Common myeloid progenitor, CD34-positive (primary cell): ENCODE measurements at regions of chr6 and their contacts with region 1.

Region 1: DNA sequence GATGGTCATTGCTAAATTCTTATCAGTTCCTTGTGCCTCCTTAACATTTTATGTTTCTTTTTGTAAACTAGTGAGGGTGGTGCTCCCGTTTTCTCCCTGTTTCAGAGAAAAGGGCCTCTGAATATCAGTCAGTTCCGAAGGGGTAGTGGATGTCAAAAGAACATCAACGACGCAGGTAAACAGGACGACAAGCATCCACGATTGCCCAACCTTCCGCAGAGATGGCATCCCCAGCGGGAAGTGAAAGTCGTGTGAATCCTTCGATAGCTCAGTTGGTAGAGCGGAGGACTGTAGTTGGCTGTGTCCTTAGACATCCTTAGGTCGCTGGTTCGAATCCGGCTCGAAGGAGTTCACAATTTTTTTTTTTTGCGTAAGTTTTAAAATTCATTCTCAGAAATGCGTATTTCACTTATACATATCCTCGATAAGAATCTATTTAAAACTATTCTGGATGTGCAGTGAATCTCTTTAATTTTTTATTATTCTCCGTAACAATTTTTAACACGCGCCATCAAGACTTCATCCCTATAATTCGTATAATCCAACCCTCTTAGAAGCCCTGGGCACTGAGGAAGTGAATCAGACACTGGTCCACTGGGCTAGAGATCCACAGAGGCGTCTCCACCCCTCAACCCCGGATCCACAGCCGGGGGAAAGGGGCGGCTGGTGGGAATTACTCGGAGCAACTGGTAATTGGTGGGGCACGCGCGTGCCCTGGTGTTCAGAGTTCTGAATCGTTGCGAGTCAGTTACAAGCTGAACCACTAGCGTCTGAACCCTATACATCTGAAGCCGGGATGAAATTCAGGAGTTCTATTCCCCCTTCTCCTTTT is 27.9 kb upstream of the ABT1 start:
- DNase-seq: peak; percentile 94 to 98 (median 96)
- H3K4me3 ChIP-seq: peak overlapping the region; percentile 50 to 97 (median 89)
- H3K27ac ChIP-seq: peak overlapping the region; percentile 13 to 78
- H3K4me1 ChIP-seq: peaks cover 0 to 10% (median 1%) of the 10 kb centered on the region in 4 experiments
- H3K27me3 ChIP-seq: no peaks in the 10 kb centered on the region

Region 2: DNA sequence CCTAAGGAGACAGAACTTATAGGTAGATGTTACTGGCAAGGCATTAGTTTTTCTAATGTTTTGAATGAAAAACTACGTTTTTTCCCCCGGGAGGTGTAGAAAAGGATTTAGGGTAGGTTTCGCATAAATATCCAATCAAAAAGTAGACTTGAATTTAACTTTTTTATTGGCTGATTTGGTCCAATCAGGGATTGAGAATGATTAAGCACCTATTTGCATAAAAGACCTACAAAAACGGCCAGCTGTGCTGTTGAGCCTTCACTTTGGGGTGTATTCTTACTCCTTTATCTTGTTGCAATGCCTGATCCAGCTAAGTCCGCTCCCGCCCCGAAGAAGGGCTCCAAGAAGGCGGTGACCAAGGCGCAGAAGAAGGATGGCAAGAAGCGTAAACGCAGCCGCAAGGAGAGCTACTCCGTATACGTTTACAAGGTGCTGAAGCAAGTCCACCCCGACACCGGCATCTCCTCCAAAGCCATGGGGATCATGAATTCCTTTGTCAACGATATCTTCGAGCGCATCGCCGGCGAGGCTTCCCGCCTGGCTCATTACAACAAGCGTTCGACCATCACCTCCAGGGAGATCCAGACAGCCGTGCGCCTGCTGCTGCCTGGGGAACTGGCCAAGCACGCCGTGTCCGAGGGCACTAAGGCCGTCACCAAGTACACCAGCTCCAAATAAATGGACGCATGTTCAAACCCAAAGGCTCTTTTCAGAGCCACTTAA is 317.3 kb before region 1 on chr6:
- CTCF ChIA-PET with region 1: no interaction called
- POLR2A ChIA-PET with region 1: no interaction called
- DNase-seq: peak; percentile 87 to 93 (median 93)
- H3K4me3 ChIP-seq: peak overlapping the region; percentile 58 to 96 (median 82)
- H3K27ac ChIP-seq: peak overlapping the region; percentile 36 to 82
- H3K4me1 ChIP-seq: peaks cover 9 to 34% (median 20%) of the 10 kb centered on the region in 4 experiments
- H3K27me3 ChIP-seq: no peaks in the 10 kb centered on the region

Region 3: DNA sequence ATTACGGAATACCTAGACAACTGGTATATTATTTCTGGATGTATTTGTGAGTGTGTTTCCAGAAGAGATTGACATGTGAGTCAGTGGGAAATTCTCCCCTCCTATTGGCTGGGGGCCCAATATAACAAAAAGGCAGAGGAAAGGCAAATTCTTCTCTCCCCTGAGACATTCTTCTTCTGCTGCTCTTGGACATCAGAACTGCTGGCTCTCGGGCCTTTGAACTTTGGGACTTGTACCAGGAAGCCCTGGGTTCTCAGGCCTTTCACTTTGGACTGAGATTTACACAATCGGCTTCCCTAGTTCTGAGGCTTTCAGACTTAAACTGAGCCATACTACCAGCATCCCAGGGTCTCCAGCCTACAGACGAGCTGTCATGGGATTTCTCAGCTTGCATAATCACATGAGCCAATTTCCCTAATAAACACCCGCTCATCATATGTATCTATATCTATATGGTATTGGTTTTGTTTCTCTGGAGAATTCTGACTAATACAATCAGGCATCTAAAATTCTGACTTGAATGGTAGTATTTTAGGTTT is 136.1 kb before region 1 on chr6:
- CTCF ChIA-PET with region 1: no interaction called
- POLR2A ChIA-PET with region 1: no interaction called
- DNase-seq: no peak
- H3K4me3 ChIP-seq: no peak overlapping the region
- H3K27ac ChIP-seq: no peak overlapping the region
- H3K4me1 ChIP-seq: no peaks in the 10 kb centered on the region
- H3K27me3 ChIP-seq: no peaks in the 10 kb centered on the region

Region 4: DNA sequence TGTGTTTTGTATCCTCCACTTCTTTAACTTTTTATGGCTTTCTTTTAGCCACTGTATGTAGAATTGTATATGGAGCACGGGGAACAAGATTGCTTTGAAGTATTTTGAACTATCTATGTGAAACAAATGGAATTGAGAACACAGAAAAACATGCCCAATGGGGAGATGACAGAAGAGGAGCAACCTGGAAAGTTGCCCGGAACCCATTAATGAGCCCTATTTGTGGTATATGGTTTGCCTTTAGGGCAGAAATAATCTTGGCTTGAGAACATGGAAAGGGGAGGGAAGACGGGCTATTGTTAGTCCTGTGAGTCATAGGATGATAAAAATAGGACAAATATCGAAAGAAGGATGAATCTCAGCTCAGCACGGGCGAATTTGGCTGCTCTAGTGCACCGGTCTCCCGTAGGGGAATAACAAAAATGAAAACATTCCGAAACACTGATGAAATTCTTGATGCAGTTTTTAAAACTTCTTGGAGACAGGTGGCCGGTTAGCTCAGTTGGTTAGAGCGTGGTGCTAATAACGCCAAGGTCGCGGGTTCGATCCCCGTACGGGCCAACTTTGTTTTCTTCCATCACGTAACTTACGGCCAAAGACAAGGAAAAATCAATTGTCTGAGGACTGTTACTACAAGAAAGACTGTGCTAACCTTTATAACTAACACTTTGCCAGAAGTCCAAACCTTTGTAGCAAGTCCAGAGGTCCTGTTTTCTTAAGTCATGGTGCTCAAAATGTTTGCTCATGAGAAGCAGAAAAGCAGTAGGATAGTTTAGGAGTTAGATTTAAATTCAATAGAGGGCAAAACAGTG is 15.0 kb before region 1 on chr6:
- CTCF ChIA-PET with region 1: interaction called, 21 read pairs
- POLR2A ChIA-PET with region 1: interaction called, 5 read pairs
- DNase-seq: peak; percentile 85 to 93 (median 92)
- H3K4me3 ChIP-seq: peak overlapping the region in 6 of 7 experiments; percentile 75 to 100 (median 90)
- H3K27ac ChIP-seq: peak overlapping the region in 1 of 2 experiments; percentile 78
- H3K4me1 ChIP-seq: peaks cover 10 to 22% (median 20%) of the 10 kb centered on the region in 4 experiments
- H3K27me3 ChIP-seq: no peaks in the 10 kb centered on the region

Region 5: DNA sequence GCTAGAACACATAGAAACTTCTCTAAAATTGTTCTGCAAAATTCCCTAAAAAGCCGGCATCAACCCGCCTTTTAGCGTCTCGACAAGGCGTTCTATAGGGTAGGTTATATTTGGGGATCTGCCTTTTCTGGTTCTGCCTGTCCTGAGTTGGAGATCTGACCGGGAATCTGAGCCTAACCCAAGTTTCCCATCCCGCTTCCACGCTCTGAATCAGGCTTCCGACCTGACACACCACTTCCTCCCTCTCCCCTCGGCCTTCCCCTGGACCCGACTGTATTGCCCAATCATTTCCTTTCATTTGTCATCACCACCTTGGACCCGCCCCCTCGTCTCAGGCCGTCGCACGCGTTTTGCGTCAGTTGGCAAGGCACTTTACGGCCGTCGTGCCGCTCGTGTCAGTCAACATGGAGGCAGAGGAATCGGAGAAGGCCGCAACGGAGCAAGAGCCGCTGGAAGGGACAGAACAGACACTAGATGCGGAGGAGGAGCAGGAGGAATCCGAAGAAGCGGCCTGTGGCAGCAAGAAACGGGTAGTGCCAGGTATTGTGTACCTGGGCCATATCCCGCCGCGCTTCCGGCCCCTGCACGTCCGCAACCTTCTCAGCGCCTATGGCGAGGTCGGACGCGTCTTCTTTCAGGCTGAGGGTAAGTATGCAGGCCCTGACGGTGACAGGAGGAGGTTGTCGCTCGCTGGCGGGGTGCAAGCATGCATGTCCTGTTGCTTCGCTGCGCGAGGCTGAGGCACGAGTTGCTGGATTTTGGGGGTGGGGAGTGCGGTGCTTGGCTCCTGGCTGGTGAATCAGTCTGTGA is 28.0 kb after region 1 on chr6 and contains the start of gene ABT1:
- CTCF ChIA-PET with region 1: interaction called, 182 read pairs
- POLR2A ChIA-PET with region 1: interaction called, 3 read pairs
- DNase-seq: peak; percentile 98 to 99 (median 99)
- H3K4me3 ChIP-seq: peak within 1 kb of the TSS; percentile 87 to 100 (median 96)
- H3K27ac ChIP-seq: peak within 1 kb of the TSS; percentile 93
- H3K4me1 ChIP-seq: peaks cover 3 to 31% (median 19%) of the 10 kb centered on the region in 4 experiments
- H3K27me3 ChIP-seq: peaks cover 4 to 26% (median 11%) of the 10 kb centered on the region in 5 experiments